MCF 10A (cell line): ENCODE measurements at regions of chr2 and their contacts with region 1.

Region 1: GRCh38 chr2:26244309-26245121 is at the starts of genes HADHA and HADHB:
- DNase-seq: peak; percentile 92
- H3K4me3 Mint-ChIP-seq: peak within 1 kb of the TSS; percentile 97
- H3K27ac Mint-ChIP-seq: peak within 1 kb of the TSS; percentile 99
- H3K4me1 Mint-ChIP-seq: peaks cover 24% of the 10 kb centered on the region
- H3K27me3 Mint-ChIP-seq: no peaks in the 10 kb centered on the region
- CTCF ChIP-seq: no peak
- total RNA-seq, gene HADHA: 132 and 152 TPM in 2 replicates
- total RNA-seq, gene HADHB: 126 and 143 TPM in 2 replicates

Region 2: DNA sequence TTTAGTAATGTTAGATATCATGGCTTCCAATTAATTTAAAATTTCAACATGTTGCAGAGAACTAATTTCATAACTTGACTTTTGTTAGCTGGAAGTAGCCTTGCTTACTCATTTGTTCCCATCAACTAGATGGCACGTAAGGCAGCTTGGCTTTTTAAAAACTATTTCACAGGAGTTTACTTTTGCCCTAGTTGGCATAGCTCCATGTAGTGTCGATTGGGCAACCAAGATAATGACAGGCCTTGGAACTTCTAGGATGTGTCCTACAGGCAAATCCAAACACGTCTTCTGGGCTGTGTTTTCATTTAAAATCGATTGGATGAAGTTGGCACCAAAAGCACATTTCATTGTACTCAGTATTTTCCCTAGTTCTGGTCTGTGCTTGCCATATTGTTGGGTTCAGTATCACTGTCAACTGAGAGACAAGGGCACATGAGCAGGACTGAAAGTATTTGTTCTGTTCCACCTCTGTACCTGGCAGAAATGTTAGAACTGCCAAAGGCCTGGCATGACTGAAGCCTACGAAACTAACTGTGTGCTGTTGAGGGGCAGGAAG is 29.6 kb after region 1 on chr2:
- CTCF ChIA-PET with region 1: interaction called, 11 read pairs
- POLR2A ChIA-PET with region 1: interaction called, 694 read pairs
- intact Hi-C with region 1: loop called (anchors 1 kb)
- DNase-seq: peak; percentile 100
- H3K4me3 Mint-ChIP-seq: peak overlapping the region; percentile 31
- H3K27ac Mint-ChIP-seq: peak overlapping the region; percentile 92
- H3K4me1 Mint-ChIP-seq: peaks cover 35% of the 10 kb centered on the region
- H3K27me3 Mint-ChIP-seq: no peaks in the 10 kb centered on the region
- CTCF ChIP-seq: no peak

Region 3: DNA sequence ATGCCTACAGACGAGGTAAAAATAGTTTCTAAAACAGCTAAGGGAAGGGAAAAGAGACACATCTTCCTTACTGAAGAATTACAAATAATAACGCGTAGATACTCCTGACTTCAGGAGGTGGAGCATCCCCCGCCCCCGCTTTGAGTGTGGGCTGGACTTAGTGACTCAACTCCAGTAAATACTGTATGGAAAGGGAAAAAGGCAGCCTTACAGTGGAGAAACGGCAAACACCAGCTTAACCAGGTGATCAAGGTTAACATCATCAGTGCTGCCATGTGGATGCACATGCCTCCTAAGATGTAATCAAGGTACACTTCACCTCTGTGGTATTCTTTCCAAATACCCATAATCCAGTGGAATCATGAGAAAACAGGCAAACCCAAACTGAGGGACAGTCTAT is 48.1 kb after region 1 on chr2:
- CTCF ChIA-PET with region 1: interaction called, 3 read pairs
- POLR2A ChIA-PET with region 1: interaction called, 177 read pairs
- intact Hi-C with region 1: no loop called
- DNase-seq: peak; percentile 80
- H3K4me3 Mint-ChIP-seq: no peak overlapping the region
- H3K27ac Mint-ChIP-seq: no peak overlapping the region
- H3K4me1 Mint-ChIP-seq: peaks cover 7% of the 10 kb centered on the region
- H3K27me3 Mint-ChIP-seq: no peaks in the 10 kb centered on the region
- CTCF ChIP-seq: no peak

Region 4: GRCh38 chr2:26330113-26330549 is 85.6 kb after region 1 on chr2:
- CTCF ChIA-PET with region 1: interaction called, 14 read pairs
- POLR2A ChIA-PET with region 1: interaction called, 126 read pairs
- intact Hi-C with region 1: loop called (anchors 1 kb)
- DNase-seq: peak; percentile 81
- H3K4me3 Mint-ChIP-seq: no peak overlapping the region
- H3K27ac Mint-ChIP-seq: no peak overlapping the region
- H3K4me1 Mint-ChIP-seq: peaks cover 14% of the 10 kb centered on the region
- H3K27me3 Mint-ChIP-seq: peaks cover 9% of the 10 kb centered on the region
- CTCF ChIP-seq: peak; percentile 82

Region 5: DNA sequence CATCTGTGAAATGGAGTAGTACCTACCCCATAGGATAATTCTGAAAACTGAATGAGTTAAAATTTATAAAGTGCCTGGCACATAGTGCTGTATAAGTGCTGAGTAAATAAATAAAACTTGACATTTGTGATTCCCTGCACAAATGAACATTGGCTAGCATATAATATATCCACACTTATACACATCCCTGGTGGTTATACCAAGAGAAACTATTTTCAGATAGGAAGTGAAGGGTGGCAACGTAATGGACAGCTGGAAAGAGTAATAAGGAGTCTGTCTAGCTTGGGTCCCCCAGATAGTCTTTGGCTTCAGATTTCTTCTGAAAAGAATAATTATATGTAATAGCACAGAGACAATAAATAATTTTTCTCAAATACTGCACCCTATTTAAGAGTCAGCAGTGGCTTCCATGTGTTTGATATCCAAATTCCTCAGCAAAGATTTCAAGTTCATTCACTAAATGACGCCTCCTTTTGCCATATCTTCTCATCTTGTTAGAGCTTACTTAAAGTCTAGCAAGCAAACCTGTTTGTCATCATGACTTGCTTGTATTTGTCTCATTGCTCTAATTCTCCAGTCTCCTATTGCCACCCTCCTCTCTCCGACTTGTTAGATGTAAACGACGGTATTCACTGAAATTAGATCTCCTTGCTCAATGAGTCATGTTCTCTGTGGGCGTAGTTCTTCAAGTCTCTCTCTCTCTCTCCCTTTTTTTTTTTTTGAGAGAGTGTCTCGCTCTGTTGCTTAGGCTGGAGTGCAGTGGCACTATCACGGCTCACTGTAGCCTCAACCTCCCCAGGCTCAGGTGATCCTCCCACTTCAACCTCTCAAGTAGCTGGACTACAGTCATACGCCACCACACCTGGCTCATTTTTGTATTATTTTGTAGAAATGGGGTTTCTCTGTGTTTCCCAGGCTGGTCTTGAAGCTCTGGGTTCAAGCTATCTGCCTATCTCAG is 110.8 kb after region 1 on chr2:
- CTCF ChIA-PET with region 1: no interaction called
- POLR2A ChIA-PET with region 1: interaction called, 272 read pairs
- intact Hi-C with region 1: no loop called
- DNase-seq: peak; percentile 96
- H3K4me3 Mint-ChIP-seq: peak overlapping the region; percentile 44
- H3K27ac Mint-ChIP-seq: peak overlapping the region; percentile 56
- H3K4me1 Mint-ChIP-seq: peaks cover 64% of the 10 kb centered on the region
- H3K27me3 Mint-ChIP-seq: no peaks in the 10 kb centered on the region
- CTCF ChIP-seq: no peak

Region 6: DNA sequence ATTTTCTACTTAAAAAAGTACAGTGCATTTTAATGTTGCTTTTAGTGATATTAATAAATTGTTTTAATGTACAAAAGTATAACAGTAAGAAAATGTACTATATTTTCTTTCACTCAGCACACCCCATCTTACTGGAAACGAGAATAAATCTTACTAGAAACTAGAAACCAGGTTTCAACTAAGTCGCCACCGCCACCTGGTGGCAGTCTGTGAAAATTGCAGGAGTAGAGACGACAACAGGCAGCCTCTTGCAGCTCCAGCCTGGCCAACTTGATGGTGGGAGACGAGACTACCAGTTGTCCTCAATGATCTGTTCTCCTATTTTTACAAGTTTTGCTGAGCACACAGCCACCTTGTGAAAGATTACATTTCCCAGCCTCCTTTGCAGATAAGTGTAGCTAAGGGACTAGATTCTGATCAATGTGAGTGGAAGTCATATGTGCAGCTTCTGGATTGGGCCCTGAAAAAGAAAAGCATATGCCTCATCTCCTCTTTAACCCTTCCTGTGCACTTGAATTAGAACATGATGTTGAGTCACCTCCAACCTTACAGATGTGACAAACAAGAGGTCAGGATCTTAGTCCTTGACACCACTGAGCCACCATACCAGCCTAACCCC is 224.7 kb after region 1 on chr2:
- CTCF ChIA-PET with region 1: interaction called, 3 read pairs
- POLR2A ChIA-PET with region 1: no interaction called
- intact Hi-C with region 1: loop called (anchors 5 kb)
- DNase-seq: peak; percentile 84
- H3K4me3 Mint-ChIP-seq: no peak overlapping the region
- H3K27ac Mint-ChIP-seq: no peak overlapping the region
- H3K4me1 Mint-ChIP-seq: no peaks in the 10 kb centered on the region
- H3K27me3 Mint-ChIP-seq: no peaks in the 10 kb centered on the region
- CTCF ChIP-seq: peak; percentile 75

Region 7: GRCh38 chr2:26720322-26721166 is 476.0 kb after region 1 on chr2:
- CTCF ChIA-PET with region 1: no interaction called
- POLR2A ChIA-PET with region 1: no interaction called
- intact Hi-C with region 1: no loop called
- DNase-seq: peak; percentile 87
- H3K4me3 Mint-ChIP-seq: no peak overlapping the region
- H3K27ac Mint-ChIP-seq: peak overlapping the region; percentile 66
- H3K4me1 Mint-ChIP-seq: peaks cover 14% of the 10 kb centered on the region
- H3K27me3 Mint-ChIP-seq: no peaks in the 10 kb centered on the region
- CTCF ChIP-seq: no peak